ENCODE measurements at regions of chr9 and their contacts with region 1.

Region 1: DNA sequence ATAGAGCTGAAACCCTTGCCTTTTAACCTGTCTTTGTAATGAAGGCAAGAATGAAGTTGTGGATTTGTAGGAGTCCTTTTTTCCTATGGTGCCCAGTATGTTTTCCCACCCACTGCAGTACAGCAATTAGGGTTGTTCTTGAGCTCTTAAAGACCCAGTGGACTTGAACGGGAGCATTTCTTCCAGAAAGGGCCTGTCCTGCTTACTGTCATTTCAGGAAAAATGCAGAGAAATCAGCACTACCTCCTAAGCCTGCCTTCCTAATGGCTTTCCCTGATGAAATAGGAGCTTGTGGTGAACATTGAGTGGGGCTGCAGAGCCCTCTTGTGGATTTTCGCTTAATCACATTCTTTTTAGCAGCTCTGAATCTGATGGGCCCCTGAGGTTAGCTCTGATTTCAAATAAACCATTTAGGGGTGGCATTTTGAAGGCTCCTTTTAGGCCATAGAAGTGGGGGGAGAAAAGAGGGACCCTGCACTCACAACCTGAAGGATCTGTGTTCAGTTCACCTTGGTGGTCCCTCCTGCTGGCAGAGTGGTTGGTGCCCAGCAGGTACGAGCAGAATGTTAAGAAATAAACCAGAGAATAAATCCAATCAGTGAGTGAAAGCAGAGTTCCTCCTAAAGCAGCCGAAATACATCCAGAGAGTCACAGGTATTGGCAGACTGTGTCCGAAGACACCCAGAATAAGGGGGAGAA is 188.0 kb upstream of the KLF9 start:
- DNase-seq: peak; percentile 71
- H3K4me3 ChIP-seq: no peak overlapping the region
- H3K27ac ChIP-seq: peak overlapping the region; percentile 76 to 77
- H3K4me1 ChIP-seq: peaks cover 9% of the 10 kb centered on the region
- H3K27me3 ChIP-seq: no peaks in the 10 kb centered on the region
- CTCF ChIP-seq: peak; percentile 54 to 91 (median 76)
- POLR2A ChIP-seq: no peak

Region 2: GRCh38 chr9:69971643-69972449 is 630.6 kb before region 1 on chr9:
- intact Hi-C with region 1: loop called (anchors 5 kb)
- DNase-seq: peak; percentile 58
- H3K4me3 ChIP-seq: no peak overlapping the region
- H3K27ac ChIP-seq: no peak overlapping the region
- H3K4me1 ChIP-seq: no peaks in the 10 kb centered on the region
- H3K27me3 ChIP-seq: no peaks in the 10 kb centered on the region
- CTCF ChIP-seq: peak; percentile 65 to 79 (median 76)
- POLR2A ChIP-seq: no peak

Region 3: GRCh38 chr9:70120834-70121510 is 481.5 kb before region 1 on chr9:
- intact Hi-C with region 1: loop called (anchors 5 kb)
- DNase-seq: no peak
- H3K4me3 ChIP-seq: no peak overlapping the region
- H3K27ac ChIP-seq: no peak overlapping the region
- H3K4me1 ChIP-seq: no peaks in the 10 kb centered on the region
- H3K27me3 ChIP-seq: no peaks in the 10 kb centered on the region
- CTCF ChIP-seq: peak in 2 of 4 experiments; percentile 9 to 16
- POLR2A ChIP-seq: no peak

Region 4: DNA sequence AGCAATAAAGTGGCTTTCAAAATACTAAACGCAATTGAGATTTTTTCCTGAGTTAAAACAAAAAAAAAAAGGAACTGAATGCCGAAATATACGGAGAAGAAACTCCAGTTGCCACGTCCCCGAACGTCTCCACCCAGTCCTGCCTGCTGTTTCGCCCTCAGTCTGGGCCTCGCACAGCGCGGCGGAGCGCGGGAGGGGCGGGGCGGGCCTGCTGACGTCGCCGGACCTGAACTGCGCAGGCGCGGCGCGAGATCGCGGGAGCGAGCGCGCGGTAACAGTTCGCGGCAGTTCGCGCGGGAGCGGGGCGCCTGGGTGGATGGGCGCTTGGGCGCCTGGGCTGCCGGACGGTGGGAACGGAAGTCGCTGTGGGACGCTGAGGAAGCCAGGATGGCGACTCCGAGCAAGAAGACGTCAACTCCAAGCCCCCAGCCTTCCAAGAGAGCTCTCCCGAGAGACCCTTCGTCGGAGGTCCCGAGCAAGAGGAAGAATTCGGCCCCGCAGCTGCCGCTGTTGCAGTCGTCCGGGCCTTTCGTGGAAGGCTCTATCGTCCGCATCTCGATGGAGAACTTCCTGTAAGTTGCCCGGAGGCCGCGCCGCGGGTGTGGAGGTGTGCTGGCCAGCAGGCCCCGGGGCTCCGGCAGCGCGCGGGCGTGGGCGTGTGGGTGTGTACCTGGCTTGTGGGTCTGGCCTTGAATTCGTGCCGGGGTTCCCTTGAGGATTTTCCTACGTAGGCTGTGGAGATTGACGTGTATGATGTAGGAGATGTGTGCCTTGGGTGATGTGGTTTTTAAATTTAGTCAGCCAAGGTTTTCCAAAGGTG is 343.6 kb before region 1 on chr9 and contains the start of gene SMC5:
- intact Hi-C with region 1: loop called (anchors 5 kb)
- DNase-seq: peak; percentile 90
- H3K4me3 ChIP-seq: peak within 1 kb of the TSS; percentile 76 to 89
- H3K27ac ChIP-seq: peak within 1 kb of the TSS; percentile 91 to 98
- H3K4me1 ChIP-seq: peaks cover 17% of the 10 kb centered on the region
- H3K27me3 ChIP-seq: no peaks in the 10 kb centered on the region
- CTCF ChIP-seq: no peak
- POLR2A ChIP-seq: peak; percentile 98
- total RNA-seq, gene SMC5: 28.7 to 29.7 TPM

Region 5: DNA sequence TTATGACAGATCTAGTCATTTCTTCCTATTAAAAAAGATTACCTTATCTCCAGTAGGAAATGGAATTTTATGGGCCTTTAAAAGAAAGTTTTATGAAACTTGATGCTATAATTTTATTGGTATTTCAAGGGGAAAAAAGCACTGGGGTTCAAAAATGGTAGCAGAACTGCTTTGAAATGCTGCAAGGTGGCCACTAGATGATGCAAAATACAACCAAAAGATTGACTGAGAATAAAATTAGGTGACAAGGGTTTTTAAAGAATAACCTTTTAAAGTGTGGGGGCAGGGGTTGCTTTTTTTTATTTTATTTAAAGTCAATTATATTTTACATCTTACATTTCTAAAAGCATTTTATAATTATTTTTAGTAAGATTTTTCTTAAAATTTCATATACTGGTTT is 249.7 kb before region 1 on chr9:
- intact Hi-C with region 1: loop called (anchors 5 kb)
- DNase-seq: no peak
- H3K4me3 ChIP-seq: no peak overlapping the region
- H3K27ac ChIP-seq: no peak overlapping the region
- H3K4me1 ChIP-seq: no peaks in the 10 kb centered on the region
- H3K27me3 ChIP-seq: no peaks in the 10 kb centered on the region
- CTCF ChIP-seq: peak in 3 of 4 experiments; percentile 51 to 76 (median 63)
- POLR2A ChIP-seq: no peak

Region 6: GRCh38 chr9:70413798-70414775 is 188.4 kb before region 1 on chr9 and contains the start of gene KLF9:
- intact Hi-C with region 1: loop called (anchors 1 kb)
- DNase-seq: peak; percentile 97
- H3K4me3 ChIP-seq: peak within 1 kb of the TSS; percentile 89 to 97
- H3K27ac ChIP-seq: peak within 1 kb of the TSS; percentile 100
- H3K4me1 ChIP-seq: peaks cover 9% of the 10 kb centered on the region
- H3K27me3 ChIP-seq: no peaks in the 10 kb centered on the region
- CTCF ChIP-seq: peak in 2 of 4 experiments; percentile 17 to 35
- POLR2A ChIP-seq: peak; percentile 97
- total RNA-seq, gene KLF9: 82.9 to 129 TPM

Region 7: DNA sequence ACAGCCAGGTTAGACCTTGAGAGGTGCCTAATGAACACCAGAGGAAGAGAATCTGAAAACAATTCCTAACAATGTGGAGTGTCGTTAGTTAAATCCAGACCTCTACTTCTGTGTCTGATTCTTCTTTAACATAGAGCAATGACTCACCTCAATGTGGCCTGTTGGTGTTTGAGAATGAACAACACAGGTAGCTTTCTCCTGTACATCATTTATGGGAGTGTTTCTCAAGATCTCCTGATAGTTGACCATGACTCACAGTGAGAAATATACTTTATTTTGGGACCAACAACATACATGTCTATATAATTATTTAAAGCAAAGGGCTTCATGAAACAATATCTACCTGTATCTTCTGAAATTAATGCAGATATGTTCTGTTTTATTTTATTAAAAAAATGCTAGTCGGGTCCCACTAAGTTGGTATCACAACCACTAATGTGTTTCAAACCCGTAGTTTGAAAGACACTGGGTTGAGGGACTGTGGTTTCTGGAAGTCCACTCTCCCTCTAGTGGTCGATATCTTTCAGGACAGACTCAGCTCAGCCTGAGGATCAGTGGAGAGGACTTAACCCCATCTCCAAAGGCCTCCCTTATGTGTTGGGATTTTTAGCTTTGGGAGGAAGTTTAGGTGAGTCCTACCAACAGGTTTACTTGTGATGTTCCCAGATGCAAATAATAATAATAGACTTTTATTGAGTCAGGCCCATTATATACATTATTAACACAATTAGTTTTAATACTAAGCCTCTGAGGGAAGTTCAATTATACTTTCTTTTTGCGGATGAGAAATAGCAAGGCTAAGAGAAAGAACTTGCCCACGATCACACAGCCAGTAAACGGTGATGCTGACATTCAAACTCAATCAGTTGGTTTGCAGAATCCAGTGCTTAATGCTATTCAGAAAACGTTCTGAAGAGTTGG is 118.0 kb before region 1 on chr9:
- intact Hi-C with region 1: loop called (anchors 2 kb)
- DNase-seq: peak; percentile 53
- H3K4me3 ChIP-seq: no peak overlapping the region
- H3K27ac ChIP-seq: peak overlapping the region; percentile 92 to 96
- H3K4me1 ChIP-seq: peaks cover 23% of the 10 kb centered on the region
- H3K27me3 ChIP-seq: no peaks in the 10 kb centered on the region
- CTCF ChIP-seq: peak; percentile 66 to 79 (median 68)
- POLR2A ChIP-seq: no peak

Region 8: DNA sequence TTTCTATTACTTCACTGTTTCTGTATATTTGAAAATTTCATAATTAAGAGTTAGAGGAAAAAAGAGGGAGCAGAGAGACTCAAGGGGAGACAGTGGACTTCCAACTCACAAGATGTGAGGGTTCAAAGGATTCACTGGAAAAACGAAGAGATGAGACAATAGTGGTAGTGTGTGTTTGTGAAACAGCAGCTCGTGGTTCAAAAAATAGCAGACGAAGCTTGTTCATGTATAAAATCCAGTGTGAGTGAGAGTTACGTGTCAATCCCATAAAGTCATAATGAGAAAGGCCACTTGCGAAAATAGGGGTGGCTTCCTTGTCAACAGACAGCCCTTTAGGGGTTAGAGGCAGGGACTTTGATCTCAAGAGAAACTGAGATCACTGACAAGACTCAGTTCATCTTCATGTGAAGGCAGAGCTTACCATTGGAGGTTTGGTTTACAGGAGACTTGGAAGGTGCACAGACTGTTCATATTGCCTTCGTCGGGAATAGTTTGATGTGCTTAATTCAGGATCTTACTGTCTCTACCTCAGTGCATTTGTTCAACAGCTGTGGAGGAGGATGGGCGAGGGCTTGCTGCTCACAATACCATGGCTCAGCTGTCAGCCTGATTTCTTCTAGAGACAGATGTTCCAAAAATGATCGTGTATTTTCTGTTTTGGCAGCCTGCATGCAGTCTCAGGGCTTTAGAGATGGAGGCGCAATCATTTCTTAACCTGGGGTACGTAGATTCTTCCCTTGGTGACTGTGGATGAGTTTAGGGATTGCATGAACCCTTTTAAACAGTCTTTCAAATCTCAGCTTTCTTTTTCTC is 82.4 kb before region 1 on chr9:
- intact Hi-C with region 1: no loop called
- DNase-seq: no peak
- H3K4me3 ChIP-seq: no peak overlapping the region
- H3K27ac ChIP-seq: no peak overlapping the region
- H3K4me1 ChIP-seq: no peaks in the 10 kb centered on the region
- H3K27me3 ChIP-seq: no peaks in the 10 kb centered on the region
- CTCF ChIP-seq: no peak
- POLR2A ChIP-seq: no peak

Region 9: GRCh38 chr9:70701163-70701562 is 98.7 kb after region 1 on chr9:
- intact Hi-C with region 1: no loop called
- DNase-seq: no peak
- H3K4me3 ChIP-seq: no peak overlapping the region
- H3K27ac ChIP-seq: no peak overlapping the region
- H3K4me1 ChIP-seq: no peaks in the 10 kb centered on the region
- H3K27me3 ChIP-seq: no peaks in the 10 kb centered on the region
- CTCF ChIP-seq: no peak
- POLR2A ChIP-seq: no peak

Measured in prostate gland (tissue), 2 donors.